ENCODE measurements at regions of chr18 and their contacts with region 1.

Region 1: GRCh38 chr18:61901323-61901986 is 8.6 kb upstream of the RNF152 start:
- DNase-seq: peak; percentile 56
- H3K4me3 ChIP-seq: no peak overlapping the region
- H3K27ac ChIP-seq: no peak overlapping the region
- H3K4me1 ChIP-seq: no peaks in the 10 kb centered on the region
- H3K27me3 ChIP-seq: no peaks in the 10 kb centered on the region
- CTCF ChIP-seq: peak; percentile 93

Region 2: DNA sequence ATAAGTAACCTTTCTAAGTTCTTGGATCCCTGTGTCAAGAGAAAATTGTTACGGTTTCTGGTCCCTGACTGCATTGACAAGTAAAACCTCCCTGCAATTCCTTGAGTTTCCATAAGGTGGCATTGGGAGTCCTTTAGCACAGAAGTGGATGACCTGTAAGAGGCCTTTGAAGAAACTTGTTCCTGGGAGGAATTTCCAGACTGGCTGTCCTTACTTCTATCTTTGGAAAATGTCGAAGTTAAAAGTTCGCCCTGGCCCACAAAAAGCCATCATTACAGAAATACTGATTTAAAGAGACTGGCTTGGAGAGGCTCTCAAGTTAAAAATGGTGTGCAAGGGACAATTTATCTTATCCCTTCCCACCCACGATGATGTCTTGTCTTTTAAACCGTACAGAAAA is 349.9 kb before region 1 on chr18:
- intact Hi-C with region 1: loop called (anchors 10 kb)
- DNase-seq: peak; percentile 68
- H3K4me3 ChIP-seq: no peak overlapping the region
- H3K27ac ChIP-seq: no peak overlapping the region
- H3K4me1 ChIP-seq: no peaks in the 10 kb centered on the region
- H3K27me3 ChIP-seq: no peaks in the 10 kb centered on the region
- CTCF ChIP-seq: peak; percentile 84

Region 3: GRCh38 chr18:61581578-61582201 is 319.8 kb before region 1 on chr18:
- intact Hi-C with region 1: loop called (anchors 5 kb)
- DNase-seq: peak; percentile 82
- H3K4me3 ChIP-seq: peak overlapping the region; percentile 23
- H3K27ac ChIP-seq: no peak overlapping the region
- H3K4me1 ChIP-seq: no peaks in the 10 kb centered on the region
- H3K27me3 ChIP-seq: no peaks in the 10 kb centered on the region
- CTCF ChIP-seq: peak; percentile 96

Measured in colonic mucosa (tissue), 4 donors.